Activated CD4-positive, alpha-beta T cell treated with anti-CD3 and anti-CD28 coated beads for 36 hours (primary cell): ENCODE measurements at regions of chr14 and their contacts with region 1.

Region 1: GRCh38 chr14:50231475-50232275 is at the start of gene SOS2:
- DNase-seq: peak; percentile 90
- ATAC-seq: peak; percentile 78
- H3K4me3 Mint-ChIP-seq: peak within 1 kb of the TSS; percentile 78
- H3K27ac Mint-ChIP-seq: peak within 1 kb of the TSS; percentile 85
- H3K4me1 Mint-ChIP-seq: peaks cover 39% of the 10 kb centered on the region
- H3K27me3 Mint-ChIP-seq: no peaks in the 10 kb centered on the region
- total RNA-seq, gene SOS2: 20.2 to 20.9 TPM

Region 2: GRCh38 chr14:49692811-49693734 is 538.6 kb before region 1 on chr14 and contains the start of gene KLHDC1:
- CTCF ChIA-PET with region 1: no interaction called
- POLR2A ChIA-PET with region 1: no interaction called
- intact Hi-C with region 1: loop called in 1 of 2 experiments (anchors 5 kb)
- DNase-seq: peak; percentile 86
- ATAC-seq: peak; percentile 63
- H3K4me3 Mint-ChIP-seq: peak within 1 kb of the TSS; percentile 72
- H3K27ac Mint-ChIP-seq: peak within 1 kb of the TSS; percentile 92
- H3K4me1 Mint-ChIP-seq: peaks cover 42% of the 10 kb centered on the region
- H3K27me3 Mint-ChIP-seq: no peaks in the 10 kb centered on the region
- total RNA-seq, gene KLHDC1: 0.81 to 1.3 TPM

Region 3: DNA sequence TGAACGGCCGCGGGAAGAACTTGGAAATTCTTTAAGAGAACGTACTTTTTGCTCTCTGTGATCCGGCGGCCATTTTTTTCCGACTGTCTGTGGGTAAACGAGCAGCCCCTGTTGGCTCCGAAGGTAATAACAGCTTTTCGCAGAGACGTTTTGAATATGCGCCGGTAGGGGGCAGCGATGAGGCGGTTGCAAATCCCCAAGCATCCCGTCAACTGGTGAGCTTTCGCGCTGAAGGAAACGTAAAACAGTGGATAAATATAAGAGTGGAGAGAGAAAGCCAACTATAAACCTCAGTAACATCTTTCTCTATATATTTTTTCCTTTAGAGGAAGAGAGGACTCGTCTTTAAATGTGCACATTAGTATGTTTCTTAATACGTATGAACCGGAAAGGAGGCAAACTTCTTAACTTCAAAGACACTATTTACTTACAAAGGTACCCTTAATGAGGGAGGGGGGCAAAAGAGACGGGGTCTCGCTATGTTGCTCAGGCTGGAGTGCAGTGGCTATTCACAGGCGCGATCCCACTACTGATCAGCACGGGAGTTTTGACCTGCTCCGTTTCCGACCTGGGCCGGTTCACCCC is 369.5 kb before region 1 on chr14:
- CTCF ChIA-PET with region 1: interaction called, 3 read pairs
- POLR2A ChIA-PET with region 1: no interaction called
- intact Hi-C with region 1: loop called (anchors 2 to 5 kb)
- DNase-seq: peak; percentile 92
- ATAC-seq: peak; percentile 13
- H3K4me3 Mint-ChIP-seq: no peak overlapping the region
- H3K27ac Mint-ChIP-seq: no peak overlapping the region
- H3K4me1 Mint-ChIP-seq: peaks cover 20% of the 10 kb centered on the region
- H3K27me3 Mint-ChIP-seq: no peaks in the 10 kb centered on the region

Region 4: DNA sequence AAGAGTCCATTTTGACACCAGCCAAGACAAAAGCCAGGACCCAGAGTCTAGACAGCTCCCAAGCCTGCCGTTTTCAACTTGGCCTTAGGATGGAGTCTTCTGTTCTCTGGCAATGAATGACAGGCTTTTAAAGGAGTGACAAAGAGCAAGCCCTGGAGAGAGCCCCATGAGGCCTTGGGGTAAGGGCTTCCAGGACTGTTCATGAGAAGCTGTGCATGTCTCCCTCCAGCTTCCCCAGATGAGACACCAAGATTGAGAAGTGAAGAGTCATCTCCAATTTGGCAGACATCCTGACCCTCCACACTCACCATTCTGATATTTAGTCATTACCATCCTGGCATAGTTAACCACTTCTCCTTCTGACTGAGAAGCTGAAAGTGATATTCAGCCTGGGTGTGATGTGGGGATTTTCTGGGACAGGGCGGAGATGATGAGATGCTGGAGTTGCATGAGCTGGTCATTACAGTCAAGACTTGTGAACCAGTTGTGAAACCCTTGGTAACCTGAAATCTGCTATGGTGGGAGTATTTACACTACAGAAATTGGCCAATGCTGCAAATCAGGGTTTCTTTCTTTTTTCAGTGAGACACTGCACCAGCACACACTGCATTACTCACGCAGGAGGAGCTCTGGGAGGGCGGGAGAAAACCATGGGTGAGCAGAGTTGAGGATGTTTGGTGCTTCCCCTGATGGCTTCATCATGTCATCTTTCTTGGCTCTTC is 193.1 kb before region 1 on chr14:
- CTCF ChIA-PET with region 1: no interaction called
- POLR2A ChIA-PET with region 1: no interaction called
- intact Hi-C with region 1: loop called in 1 of 2 experiments (anchors 1 kb)
- DNase-seq: peak; percentile 88
- ATAC-seq: peak; percentile 82
- H3K4me3 Mint-ChIP-seq: peak overlapping the region; percentile 75
- H3K27ac Mint-ChIP-seq: peak overlapping the region; percentile 99
- H3K4me1 Mint-ChIP-seq: peaks cover 66% of the 10 kb centered on the region
- H3K27me3 Mint-ChIP-seq: no peaks in the 10 kb centered on the region

Region 5: GRCh38 chr14:50311975-50312733 is 80.5 kb after region 1 on chr14 and contains the starts of genes DMAC2L and L2HGDH:
- CTCF ChIA-PET with region 1: no interaction called
- POLR2A ChIA-PET with region 1: no interaction called
- intact Hi-C with region 1: loop called (anchors 1 to 2 kb)
- DNase-seq: peak; percentile 93
- ATAC-seq: peak; percentile 95
- H3K4me3 Mint-ChIP-seq: peak within 1 kb of the TSS; percentile 85
- H3K27ac Mint-ChIP-seq: peak within 1 kb of the TSS; percentile 95
- H3K4me1 Mint-ChIP-seq: peaks cover 41% of the 10 kb centered on the region
- H3K27me3 Mint-ChIP-seq: no peaks in the 10 kb centered on the region
- total RNA-seq, gene DMAC2L: 7.4 to 12.6 TPM
- total RNA-seq, gene L2HGDH: 12.8 to 19.0 TPM

Region 6: DNA sequence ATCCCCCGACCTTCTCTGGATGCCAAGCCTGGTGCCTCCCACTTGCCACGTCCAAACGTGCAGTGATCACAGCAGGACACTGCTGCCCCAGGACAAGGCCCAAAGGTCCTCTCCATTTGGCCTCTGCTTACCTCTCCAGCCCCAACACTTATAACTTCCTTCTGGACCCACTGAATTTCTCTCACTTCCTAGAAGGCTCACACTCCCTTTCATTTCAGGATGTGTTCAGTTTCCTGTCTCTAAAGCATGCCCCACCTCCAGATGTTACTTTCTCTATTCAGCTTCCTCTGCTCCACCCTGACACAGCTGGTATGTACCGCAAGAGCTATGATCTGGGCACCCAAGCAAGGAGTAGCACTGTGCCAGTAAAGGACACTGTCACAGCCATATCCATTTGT is 132.0 kb after region 1 on chr14:
- CTCF ChIA-PET with region 1: no interaction called
- POLR2A ChIA-PET with region 1: no interaction called
- intact Hi-C with region 1: loop called in 1 of 2 experiments (anchors 5 kb)
- DNase-seq: peak; percentile 66
- ATAC-seq: peak; percentile 96
- H3K4me3 Mint-ChIP-seq: peak overlapping the region; percentile 82
- H3K27ac Mint-ChIP-seq: peak overlapping the region; percentile 94
- H3K4me1 Mint-ChIP-seq: peaks cover 20% of the 10 kb centered on the region
- H3K27me3 Mint-ChIP-seq: no peaks in the 10 kb centered on the region

Region 7: DNA sequence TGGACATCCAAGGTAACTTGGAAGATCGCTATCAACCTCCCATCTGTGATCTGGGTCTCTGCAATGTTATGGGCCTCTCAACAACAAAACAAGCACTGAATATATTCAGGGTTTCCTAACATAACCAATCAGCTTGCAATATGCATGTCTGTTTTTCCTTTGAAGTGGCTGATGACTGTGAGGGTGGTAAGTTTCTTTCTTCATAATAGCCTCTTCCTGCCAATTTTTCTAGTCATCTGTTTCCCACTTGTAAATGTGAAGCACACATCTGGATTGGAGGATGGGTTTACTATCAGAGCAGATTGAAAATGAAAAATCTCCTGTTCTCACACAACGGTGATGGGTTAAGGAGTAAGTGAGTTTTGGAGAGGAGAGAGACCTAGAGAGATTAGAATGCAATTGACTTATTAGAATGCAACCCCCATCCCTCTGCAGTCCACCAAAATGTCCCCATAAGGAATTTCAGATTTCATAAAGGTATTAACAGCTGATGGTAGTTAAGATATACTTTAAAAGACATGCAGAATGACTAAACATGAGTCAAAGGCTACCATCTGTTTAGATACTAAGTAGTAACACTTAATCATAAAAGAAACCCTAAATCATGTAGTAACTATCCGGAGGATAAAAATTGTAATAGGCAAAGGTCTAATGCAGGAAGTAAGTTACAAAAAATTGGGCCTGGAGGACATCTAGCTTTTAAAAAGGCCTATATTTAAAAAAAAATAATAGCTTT is 494.9 kb after region 1 on chr14:
- CTCF ChIA-PET with region 1: no interaction called
- POLR2A ChIA-PET with region 1: no interaction called
- intact Hi-C with region 1: loop called in 1 of 2 experiments (anchors 2 kb)
- DNase-seq: peak; percentile 31
- ATAC-seq: peak; percentile 93
- H3K4me3 Mint-ChIP-seq: peak overlapping the region; percentile 39
- H3K27ac Mint-ChIP-seq: peak overlapping the region; percentile 95
- H3K4me1 Mint-ChIP-seq: peaks cover 32% of the 10 kb centered on the region
- H3K27me3 Mint-ChIP-seq: no peaks in the 10 kb centered on the region

Region 8: GRCh38 chr14:51335531-51335930 is 1103.9 kb after region 1 on chr14:
- CTCF ChIA-PET with region 1: no interaction called
- POLR2A ChIA-PET with region 1: no interaction called
- intact Hi-C with region 1: no loop called
- DNase-seq: no peak
- ATAC-seq: no peak
- H3K4me3 Mint-ChIP-seq: no peak overlapping the region
- H3K27ac Mint-ChIP-seq: no peak overlapping the region
- H3K4me1 Mint-ChIP-seq: peaks cover 5% of the 10 kb centered on the region
- H3K27me3 Mint-ChIP-seq: peaks cover 8% of the 10 kb centered on the region